AG04450 (cell line): ENCODE measurements at regions of chr19 and their contacts with region 1.

Region 1: DNA sequence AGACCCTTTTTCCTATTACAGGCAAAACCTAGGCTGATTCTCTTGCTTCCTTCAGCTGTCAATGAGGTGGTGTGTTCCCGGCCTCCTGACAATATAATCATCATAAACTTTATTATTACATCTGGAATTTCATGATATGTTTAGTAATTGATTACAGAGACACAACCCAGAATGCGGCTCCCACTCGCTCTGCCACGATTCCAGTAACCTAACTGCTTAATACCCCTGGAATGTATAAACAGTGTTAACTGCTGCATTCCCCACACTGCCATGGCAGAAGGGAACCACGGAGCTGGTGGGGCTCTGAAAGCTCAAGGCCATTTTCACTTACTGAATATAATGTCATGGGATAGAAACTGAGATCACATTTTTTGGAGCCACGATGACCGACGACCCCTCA is 17.1 kb downstream of the TSHZ3 start:
- DNase-seq: no peak
- H3K4me3 ChIP-seq: no peak overlapping the region
- H3K27ac ChIP-seq: peak overlapping the region; percentile 90
- H3K27me3 ChIP-seq: no peaks in the 10 kb centered on the region
- CTCF ChIP-seq: no peak

Region 2: DNA sequence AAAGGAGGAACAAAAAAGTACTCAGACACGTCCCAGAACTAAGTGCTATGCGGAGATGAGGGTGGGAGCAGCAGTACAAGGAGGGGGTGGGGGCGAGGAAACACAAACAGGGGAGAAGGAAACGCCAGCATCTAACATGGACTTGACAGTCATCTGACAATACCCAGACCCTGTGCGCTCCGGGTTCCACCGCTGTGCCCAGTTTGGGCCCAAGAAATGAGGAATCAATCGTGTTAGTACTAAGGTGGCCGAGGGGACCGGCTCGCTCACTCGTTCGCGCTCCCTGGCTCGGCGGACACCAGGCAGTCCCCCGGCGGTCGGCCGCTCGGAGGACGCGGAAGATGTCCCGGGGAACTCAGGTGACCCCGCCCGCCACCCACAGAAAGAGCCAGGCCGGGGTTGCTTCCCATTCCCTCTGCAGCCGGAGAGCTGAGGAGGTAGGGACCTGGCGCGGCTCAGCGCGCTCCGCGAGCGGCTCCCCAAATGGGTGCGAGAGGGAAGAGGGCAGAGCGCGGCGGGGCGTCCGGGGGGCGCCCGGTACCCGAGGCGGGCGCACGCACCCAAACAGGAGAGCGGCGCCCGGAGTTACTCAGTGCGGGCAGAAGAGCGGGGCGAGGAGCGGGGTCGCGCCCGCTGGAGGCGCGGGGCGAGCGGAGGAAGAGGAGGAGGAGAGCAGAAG is 16.5 kb after region 1 on chr19:
- CTCF ChIA-PET with region 1: interaction called, 3 read pairs
- POLR2A ChIA-PET with region 1: interaction called, 13 read pairs
- DNase-seq: no peak
- H3K4me3 ChIP-seq: peak overlapping the region; percentile 88
- H3K27ac ChIP-seq: peak overlapping the region; percentile 70
- H3K27me3 ChIP-seq: no peaks in the 10 kb centered on the region
- CTCF ChIP-seq: no peak

Region 3: DNA sequence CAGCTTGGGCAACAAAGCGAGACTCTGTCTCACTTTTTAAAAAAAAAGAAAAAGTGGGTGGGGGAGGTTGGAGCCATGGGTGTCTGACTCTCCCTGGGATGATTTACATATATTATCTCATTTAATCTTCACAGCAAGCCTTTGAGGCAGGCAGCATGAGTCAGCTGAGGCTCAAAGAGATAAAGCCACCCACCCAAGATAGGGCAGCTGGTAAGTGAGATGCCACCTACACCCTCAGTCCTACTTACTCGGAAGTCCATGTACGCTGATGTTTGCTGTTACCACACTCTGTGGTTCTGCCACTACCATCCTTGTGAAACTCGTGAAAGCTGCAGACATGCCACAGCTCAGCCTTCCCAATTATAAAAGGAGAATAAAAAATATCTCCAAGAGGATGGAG is 159.1 kb after region 1 on chr19:
- CTCF ChIA-PET with region 1: no interaction called
- POLR2A ChIA-PET with region 1: no interaction called
- DNase-seq: no peak
- H3K4me3 ChIP-seq: no peak overlapping the region
- H3K27ac ChIP-seq: no peak overlapping the region
- H3K27me3 ChIP-seq: no peaks in the 10 kb centered on the region
- CTCF ChIP-seq: no peak